Gastrocnemius medialis (tissue), 4 donors: ENCODE measurements at regions of chr1 and their contacts with region 1.

Region 1: GRCh38 chr1:1511533-1512285 is at the start of gene ATAD3A:
- DNase-seq: peak; percentile 97 to 98
- ATAC-seq: peak; percentile 92 to 93
- H3K4me3 ChIP-seq: peak within 1 kb of the TSS; percentile 81 to 99 (median 94)
- H3K27ac ChIP-seq: peak within 1 kb of the TSS; percentile 93 to 100 (median 96)
- H3K4me1 ChIP-seq: peaks cover 6 to 13% of the 10 kb centered on the region in 2 donors
- H3K27me3 ChIP-seq: no peaks in the 10 kb centered on the region
- CTCF ChIP-seq: peak in 3 of 5 experiments; percentile 9 to 46 (median 27)
- POLR2A ChIP-seq: peak; percentile 84 to 91
- total RNA-seq, gene ATAD3A: 22.9 to 47.9 (median 35.6) TPM

Region 2: DNA sequence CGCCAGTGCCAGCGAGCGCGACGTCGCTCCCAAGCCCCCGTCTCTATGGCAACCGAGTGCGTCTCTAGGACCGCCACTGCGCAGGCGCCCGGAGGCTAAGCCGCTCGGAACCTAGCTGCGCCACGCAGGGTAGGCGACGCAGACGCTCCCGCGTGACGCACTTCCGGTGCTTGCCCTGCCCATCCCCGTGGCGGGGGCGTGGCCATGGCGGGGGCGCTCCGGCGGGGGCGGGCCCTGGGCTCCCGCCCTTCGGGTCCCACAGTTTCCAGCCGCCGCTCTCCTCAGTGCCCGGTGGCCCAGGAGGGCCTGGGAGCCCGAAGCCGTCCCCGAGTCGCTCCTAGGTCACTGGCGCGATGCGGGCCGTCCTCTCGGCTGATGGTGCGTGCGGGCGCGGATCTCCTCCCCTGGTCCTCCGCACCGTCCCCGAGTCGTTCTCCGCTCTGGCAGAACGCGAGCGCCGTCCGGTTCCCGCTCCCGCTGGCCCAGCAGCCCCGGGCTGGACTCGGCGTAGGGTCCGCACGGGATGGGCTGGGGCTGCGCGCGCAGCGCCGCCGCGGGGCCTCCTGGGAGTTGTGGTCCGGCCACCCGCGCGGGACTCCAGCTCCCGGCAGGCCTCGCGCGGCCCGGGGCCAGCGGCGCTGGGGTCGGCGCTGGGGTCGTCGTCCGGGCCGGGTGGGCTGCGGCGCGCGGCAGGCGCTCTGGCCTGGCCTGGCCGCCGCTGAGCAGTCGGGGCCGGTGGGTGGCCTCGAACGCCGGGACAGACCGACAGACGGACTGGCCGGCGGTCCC is 103.7 kb after region 1 on chr1 and contains the start of gene MIB2:
- in situ Hi-C with region 1: no loop called
- intact Hi-C with region 1: loop called (anchors 5 kb)
- DNase-seq: peak; percentile 91 to 92
- ATAC-seq: peak; percentile 83 to 89
- H3K4me3 ChIP-seq: peak within 1 kb of the TSS; percentile 82 to 99 (median 89)
- H3K27ac ChIP-seq: peak within 1 kb of the TSS; percentile 98 to 100 (median 100)
- H3K4me1 ChIP-seq: peaks cover 41 to 42% of the 10 kb centered on the region in 2 donors
- H3K27me3 ChIP-seq: no peaks in the 10 kb centered on the region
- CTCF ChIP-seq: peak in 1 of 5 experiments; percentile 16
- POLR2A ChIP-seq: peak; percentile 86 to 90
- total RNA-seq, gene MIB2: 66.4 to 154 (median 117) TPM